AG04449 (cell line): ENCODE measurements at regions of chr1 and their contacts with region 1.

Region 1: GRCh38 chr1:35564037-35564883 is 6.7 kb downstream of the NCDN start:
- DNase-seq: no peak
- H3K4me3 ChIP-seq: no peak overlapping the region
- CTCF ChIP-seq: peak; percentile 80

Region 2: DNA sequence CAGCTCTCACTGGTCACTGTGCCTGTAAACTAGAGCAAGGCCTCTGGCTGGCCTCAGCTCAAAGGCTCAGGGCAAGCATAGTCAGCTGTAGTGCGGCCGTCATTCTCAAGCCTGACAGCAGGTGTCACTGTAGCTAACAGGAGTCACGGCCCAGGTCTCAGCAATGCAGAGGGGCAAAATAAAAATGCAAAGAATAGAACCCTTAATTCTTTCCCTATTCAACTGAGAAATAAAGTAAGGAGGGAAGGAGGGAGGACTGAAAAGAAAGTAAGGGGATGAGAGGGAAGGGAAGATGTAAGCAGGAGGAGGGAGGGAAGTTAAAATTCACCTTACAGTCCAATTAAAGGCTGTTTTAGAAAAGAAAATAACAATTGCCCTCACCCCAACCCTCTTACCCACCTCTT is 113.1 kb before region 1 on chr1:
- CTCF ChIA-PET with region 1: interaction called, 326 read pairs
- POLR2A ChIA-PET with region 1: interaction called, 7 read pairs
- DNase-seq: no peak
- H3K4me3 ChIP-seq: no peak overlapping the region
- CTCF ChIP-seq: peak; percentile 88

Region 3: GRCh38 chr1:35585281-35585680 is 21.0 kb after region 1 on chr1:
- CTCF ChIA-PET with region 1: interaction called, 19 read pairs
- POLR2A ChIA-PET with region 1: no interaction called
- DNase-seq: no peak
- H3K4me3 ChIP-seq: no peak overlapping the region
- CTCF ChIP-seq: no peak

Region 4: DNA sequence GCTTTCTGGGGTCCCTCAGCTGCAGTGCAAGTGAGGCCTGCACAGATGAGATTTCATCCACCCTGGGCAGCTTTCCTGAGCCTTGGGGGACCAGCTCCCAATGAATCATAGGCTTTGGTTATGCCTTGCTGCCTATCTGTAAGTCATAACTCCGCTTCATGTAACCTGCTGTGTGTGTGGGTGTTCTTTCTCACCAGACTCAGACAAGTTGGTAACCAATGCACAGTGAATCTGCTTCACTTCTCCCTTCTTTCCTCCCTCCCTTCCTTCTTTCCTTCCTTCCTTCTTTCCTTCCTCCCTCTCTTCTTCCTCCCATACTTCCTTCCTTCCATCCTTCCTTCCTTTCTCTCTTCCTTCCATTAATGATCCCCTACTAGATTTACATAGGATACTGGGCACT is 111.5 kb after region 1 on chr1:
- CTCF ChIA-PET with region 1: no interaction called
- POLR2A ChIA-PET with region 1: no interaction called
- DNase-seq: no peak
- H3K4me3 ChIP-seq: no peak overlapping the region
- CTCF ChIP-seq: no peak

Region 5: DNA sequence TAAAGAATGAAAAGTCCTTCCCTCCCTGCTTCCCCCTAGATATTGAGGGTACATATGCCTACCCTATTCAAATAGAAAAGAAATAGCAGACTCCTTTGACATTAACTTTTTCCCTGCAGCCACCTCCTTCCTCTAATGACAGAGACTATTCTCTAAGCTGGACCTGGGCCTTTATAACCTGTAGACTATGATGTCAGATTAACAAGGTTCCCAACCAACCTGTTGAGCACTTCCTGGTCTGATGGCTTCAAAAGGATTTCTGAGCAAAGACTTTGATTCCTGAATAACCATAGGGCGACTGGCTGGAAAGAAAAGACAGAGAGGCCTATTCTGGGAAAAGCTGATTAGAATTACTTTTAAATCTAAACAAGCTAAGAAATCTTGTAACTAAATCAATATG is 172.9 kb after region 1 on chr1:
- CTCF ChIA-PET with region 1: interaction called, 657 read pairs
- POLR2A ChIA-PET with region 1: no interaction called
- DNase-seq: no peak
- H3K4me3 ChIP-seq: no peak overlapping the region
- CTCF ChIP-seq: no peak

Region 6: DNA sequence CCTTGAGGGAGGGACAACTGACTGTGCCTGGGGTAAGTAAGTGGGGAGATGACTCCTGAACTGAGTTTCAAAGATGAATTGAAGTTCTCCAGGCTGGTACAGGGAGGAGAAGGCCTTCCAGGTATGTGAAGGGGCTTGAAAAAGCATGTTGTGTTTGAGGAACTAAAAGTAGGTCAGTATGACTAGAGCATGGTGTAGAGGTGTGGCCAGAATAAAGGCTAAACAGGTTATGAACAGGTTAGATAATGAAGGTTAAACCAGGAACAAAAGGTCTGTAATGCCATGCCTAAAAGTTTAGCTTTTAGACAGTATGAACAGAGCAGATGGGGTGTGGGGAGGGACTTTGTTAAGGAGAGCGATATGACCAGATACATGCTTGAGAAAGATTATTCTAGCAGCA is 212.8 kb after region 1 on chr1:
- CTCF ChIA-PET with region 1: interaction called, 78 read pairs
- POLR2A ChIA-PET with region 1: interaction called, 3 read pairs
- DNase-seq: no peak
- H3K4me3 ChIP-seq: no peak overlapping the region
- CTCF ChIP-seq: no peak

Region 7: DNA sequence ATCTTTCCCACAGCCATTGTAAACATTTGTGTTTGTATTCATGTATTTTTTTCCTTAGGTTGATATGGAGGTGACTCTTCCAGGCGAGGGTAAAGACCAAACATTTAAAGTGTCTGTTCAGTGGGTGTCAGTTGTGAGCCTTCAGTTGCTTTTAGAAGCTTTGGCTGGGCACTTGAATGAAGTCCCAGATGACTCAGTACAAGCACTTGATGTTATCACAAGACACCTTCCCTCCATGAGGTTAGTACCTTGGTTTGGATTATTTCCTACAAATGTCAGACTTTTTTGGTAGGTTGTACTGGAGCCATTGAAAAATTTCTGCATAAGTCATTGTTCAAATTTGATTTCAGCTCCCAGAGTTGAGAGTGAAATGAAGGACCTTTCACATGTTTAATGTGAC is 261.0 kb after region 1 on chr1:
- CTCF ChIA-PET with region 1: no interaction called
- POLR2A ChIA-PET with region 1: no interaction called
- DNase-seq: no peak
- H3K4me3 ChIP-seq: no peak overlapping the region
- CTCF ChIP-seq: no peak